AG04450 (cell line): ENCODE measurements at regions of chr9 and their contacts with region 1.

Region 1: GRCh38 chr9:129737479-129738274 is 15.2 kb downstream of the PTGES start:
- DNase-seq: no peak
- H3K4me3 ChIP-seq: peak overlapping the region; percentile 57
- H3K27ac ChIP-seq: no peak overlapping the region
- H3K27me3 ChIP-seq: no peaks in the 10 kb centered on the region
- CTCF ChIP-seq: peak; percentile 92

Region 2: DNA sequence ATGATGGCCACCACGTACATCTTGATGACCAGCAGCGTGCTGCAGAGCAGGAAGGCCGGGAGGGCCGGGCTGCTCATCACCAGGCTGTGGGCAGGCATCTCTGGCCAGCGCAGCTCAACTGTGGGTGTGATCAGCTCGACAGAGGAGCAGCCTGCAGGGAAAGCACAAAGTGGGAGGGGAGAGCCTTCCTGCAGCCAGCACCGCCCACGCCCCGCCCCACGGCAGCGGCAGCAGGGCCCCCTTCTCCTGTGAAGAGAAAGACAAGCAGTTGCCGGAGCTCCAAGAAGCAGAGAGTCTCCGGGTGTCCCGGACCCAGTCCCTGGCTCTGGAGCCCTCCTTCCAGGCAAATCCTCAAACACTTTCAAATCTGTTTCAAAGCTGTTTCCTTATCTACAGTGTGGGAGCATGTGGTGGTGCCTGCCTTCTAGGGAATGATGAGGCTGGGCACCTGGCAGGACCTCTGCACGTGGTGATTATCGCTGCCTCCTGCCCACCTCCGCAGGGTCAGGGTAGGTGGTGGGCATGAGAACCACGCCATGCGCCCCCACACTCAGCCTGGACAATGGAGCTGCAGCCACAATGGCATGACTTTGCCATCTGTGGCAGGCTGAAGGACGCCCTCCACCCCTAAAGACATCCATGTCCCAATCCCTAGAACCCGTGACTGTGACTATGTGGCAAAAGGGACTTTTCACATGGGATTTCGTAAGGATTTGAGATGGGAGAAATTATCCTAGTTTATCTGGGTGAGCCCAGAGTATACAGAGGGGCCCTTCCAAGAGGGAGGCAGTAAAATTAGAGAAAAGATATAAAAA is 15.4 kb after region 1 on chr9 and contains the start of gene PTGES:
- CTCF ChIA-PET with region 1: interaction called, 48 read pairs
- POLR2A ChIA-PET with region 1: no interaction called
- DNase-seq: peak; percentile 68
- H3K4me3 ChIP-seq: peak within 1 kb of the TSS; percentile 68
- H3K27ac ChIP-seq: peak within 1 kb of the TSS; percentile 21
- H3K27me3 ChIP-seq: peaks cover 2% of the 10 kb centered on the region
- CTCF ChIP-seq: no peak
- polyA plus RNA-seq, gene PTGES: 17.0 and 21.4 TPM in 2 replicates

Region 3: GRCh38 chr9:129761901-129762364 is 24.3 kb after region 1 on chr9:
- CTCF ChIA-PET with region 1: interaction called, 12 read pairs
- POLR2A ChIA-PET with region 1: interaction called, 14 read pairs
- DNase-seq: peak; percentile 55
- H3K4me3 ChIP-seq: peak overlapping the region; percentile 34
- H3K27ac ChIP-seq: peak overlapping the region; percentile 97
- H3K27me3 ChIP-seq: no peaks in the 10 kb centered on the region
- CTCF ChIP-seq: no peak

Region 4: DNA sequence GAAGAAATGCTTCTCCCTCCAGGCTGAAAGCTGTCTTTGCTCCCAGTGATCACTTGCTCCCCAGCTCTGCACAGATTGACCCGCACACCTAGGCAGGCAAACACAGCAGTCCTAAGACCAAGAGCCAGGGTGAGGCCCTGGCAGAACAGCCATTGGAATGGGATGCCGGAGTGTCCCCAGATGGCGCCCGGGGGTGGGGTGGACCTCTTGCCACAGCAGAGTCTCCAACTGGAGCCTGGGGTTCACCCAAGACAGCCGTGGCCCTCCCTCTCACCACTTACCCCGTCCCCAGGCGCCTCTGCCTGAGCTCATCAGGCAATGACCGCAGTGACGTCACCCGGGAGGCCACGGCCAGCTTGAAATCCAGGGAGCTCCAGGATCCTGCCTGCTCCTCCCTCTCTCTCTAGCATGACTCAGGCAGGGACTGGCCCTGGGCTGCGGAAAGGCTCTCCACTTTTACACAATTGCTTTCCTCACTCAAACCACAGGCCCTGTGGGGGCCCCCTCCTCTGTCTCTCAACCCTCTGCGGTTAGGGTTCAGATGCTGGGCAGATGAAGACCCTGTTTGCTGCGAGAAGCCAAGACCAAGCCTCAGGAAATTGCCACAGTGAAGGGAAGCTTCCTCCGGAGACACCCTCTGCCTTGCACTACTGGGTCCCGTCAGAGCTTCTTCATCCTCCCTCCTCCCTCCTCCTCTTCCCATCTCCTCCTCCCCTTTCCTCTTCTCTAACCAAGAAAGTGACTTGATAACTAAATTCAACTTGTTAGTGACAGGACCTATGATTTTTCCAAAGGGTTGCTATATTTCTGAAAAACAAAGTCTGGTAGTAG is 39.5 kb after region 1 on chr9:
- CTCF ChIA-PET with region 1: interaction called, 85 read pairs
- POLR2A ChIA-PET with region 1: interaction called, 5 read pairs
- DNase-seq: peak; percentile 98
- H3K4me3 ChIP-seq: peak overlapping the region; percentile 42
- H3K27ac ChIP-seq: peak overlapping the region; percentile 85
- H3K27me3 ChIP-seq: no peaks in the 10 kb centered on the region
- CTCF ChIP-seq: no peak

Region 5: DNA sequence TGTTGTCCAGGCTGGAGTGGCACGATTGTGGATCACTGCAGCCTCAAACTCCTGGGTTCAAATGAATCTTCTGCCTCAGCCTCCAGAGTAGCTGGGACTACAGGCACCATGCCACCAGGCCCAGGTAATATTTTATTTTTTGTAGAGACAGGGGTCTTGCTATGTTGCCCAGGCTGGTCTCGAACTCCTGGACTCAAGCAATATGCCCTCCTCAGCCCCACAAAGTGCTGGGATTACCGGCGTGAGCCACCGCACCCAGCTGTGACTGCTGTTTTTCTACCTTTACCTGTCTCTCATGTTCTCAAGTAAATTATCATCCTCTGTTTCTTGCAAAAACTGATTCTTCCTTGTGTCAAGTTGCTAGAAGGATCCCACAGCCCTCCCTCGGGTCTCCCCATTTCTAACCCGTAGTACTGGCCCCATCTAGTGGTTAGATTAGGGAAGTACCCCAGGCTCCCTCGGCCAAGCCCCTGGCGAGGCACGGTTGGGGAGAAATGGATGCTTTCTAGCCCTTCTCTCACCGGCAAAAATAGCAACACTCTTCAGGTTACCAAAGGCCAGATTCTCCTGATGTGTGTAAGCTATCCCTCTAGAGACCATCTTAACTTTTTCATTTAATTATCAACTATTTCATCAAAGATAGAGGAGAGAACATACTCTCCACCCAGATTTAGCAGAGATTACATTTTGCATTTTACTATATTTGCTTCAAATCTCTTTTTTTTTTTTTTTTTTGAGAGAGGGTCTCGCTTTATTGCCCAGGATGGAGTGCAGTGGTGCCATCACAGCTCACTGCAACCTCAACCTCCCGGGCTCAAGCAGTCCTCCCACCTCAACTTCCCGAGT is 46.1 kb after region 1 on chr9:
- CTCF ChIA-PET with region 1: interaction called, 85 read pairs
- POLR2A ChIA-PET with region 1: no interaction called
- DNase-seq: peak; percentile 57
- H3K4me3 ChIP-seq: no peak overlapping the region
- H3K27ac ChIP-seq: no peak overlapping the region
- H3K27me3 ChIP-seq: peaks cover 4% of the 10 kb centered on the region
- CTCF ChIP-seq: peak; percentile 97